Panc1 (cell line): ENCODE measurements at regions of chr4 and their contacts with region 1.

Region 1: DNA sequence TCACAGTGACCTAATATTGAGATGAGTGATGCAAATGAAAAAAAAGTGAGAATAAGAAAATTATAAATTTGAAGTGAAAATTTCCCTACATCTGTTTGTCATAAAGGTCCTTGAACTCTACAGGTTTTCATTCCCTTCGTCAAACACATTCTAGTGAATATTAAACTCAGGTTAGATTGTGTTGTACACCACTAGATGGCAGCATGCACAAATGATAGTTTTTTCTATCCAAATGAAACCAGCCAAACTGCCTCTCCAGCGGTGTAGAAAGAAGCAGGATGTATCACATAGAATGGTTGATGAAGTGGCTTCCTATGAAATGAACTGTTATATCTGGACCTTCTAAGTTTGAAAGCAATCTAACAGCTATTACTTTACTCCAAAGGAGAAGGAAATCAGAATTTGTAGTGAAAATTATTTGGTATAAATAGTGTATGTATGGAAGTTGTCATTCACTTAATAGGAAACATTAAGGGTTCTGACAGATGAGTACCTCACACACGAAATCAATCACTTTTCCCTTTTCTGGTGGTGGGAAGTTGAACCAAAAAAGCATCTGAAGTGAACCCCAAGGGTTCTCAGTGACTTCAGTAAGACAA is 382.7 kb downstream of the UNC5C start:
- DNase-seq: peak; percentile 30
- ATAC-seq: peak; percentile 83
- H3K4me3 ChIP-seq: no peak overlapping the region
- H3K27ac ChIP-seq: peak overlapping the region; percentile 54; the same call in 1 of the 2 replicates
- H3K4me1 ChIP-seq: no peaks in the 10 kb centered on the region
- H3K27me3 ChIP-seq: no peaks in the 10 kb centered on the region
- CTCF ChIP-seq: peak; percentile 48; the same call in 1 of the 2 replicates

Region 2: DNA sequence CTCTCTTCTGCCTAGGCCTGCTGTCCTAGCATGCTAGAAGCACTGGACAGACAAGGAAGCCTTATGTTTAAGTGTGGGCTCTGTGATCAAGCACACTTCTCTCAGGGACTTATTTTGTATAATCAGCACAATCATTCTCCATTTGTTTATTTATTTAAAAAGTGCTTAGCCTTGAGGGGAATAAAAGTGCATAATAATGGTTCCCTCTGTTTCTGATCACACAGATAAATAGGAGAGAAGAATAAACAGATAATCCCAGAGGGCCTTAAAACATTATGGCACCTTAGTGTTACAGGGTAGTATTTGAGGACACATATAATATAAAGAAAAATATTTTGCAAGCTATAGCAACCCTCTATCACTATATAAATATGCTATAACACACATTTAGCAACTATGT is 236.3 kb after region 1 on chr4:
- CTCF ChIA-PET with region 1: no interaction called
- POLR2A ChIA-PET with region 1: no interaction called
- in situ Hi-C with region 1: no loop called
- intact Hi-C with region 1: no loop called
- DNase-seq: no peak
- ATAC-seq: no peak
- H3K4me3 ChIP-seq: no peak overlapping the region
- H3K27ac ChIP-seq: no peak overlapping the region
- H3K4me1 ChIP-seq: no peaks in the 10 kb centered on the region
- H3K27me3 ChIP-seq: no peaks in the 10 kb centered on the region
- CTCF ChIP-seq: no peak

Region 3: DNA sequence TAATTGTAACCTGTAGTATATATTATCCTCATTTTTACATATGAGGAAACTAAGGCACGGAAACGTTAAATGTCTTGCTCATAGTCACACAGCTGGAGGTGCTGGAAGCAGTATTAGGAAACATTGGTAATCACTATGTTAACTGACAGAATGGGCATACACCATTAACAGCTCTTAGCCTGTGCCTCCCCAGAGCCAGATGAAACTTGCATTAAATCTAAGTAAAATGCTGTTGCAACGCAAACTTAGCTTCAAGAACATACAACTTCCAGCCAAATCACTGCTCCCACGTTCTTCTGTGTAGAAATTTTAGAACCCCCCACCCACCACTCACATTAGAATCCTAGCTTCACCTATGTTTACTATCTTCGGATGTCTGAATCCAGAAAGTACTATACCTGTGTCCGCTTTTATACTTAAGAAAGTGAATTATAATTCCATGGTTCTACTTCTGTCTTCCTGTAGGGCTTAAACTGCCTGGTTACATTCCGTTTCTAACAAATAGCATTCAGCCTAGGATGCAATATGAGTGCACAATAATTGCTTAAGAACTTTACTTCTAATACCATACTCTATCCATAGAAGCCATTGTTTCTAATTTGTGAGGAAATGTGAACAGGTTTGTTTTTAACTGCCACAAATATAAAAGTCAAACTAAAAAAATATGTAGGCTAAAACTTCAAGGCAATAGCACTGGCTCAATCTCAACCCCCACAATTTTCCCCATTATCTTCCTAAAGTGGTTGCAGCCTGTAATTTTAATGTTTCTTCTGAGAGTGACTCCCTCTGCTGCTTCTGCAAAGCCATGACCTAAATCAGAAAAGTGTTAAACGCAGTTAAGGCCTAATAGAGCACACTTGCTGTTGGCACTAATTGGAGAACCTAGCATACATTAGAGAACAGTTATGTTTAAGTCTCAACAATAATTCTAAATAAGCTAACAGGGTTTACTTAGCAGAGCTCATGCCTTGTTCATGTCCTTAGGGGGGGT is 378.4 kb after region 1 on chr4:
- CTCF ChIA-PET with region 1: no interaction called
- POLR2A ChIA-PET with region 1: no interaction called
- in situ Hi-C with region 1: no loop called
- intact Hi-C with region 1: loop called (anchors 2 kb)
- DNase-seq: no peak
- ATAC-seq: no peak
- H3K4me3 ChIP-seq: peak overlapping the region; percentile 8; a peak in 2 of 4 replicates
- H3K27ac ChIP-seq: peak overlapping the region; percentile 54
- H3K4me1 ChIP-seq: peaks cover 16% of the 10 kb centered on the region; the same call in 1 of the 2 replicates
- H3K27me3 ChIP-seq: no peaks in the 10 kb centered on the region
- CTCF ChIP-seq: peak; percentile 19; the same call in 1 of the 2 replicates

Region 4: DNA sequence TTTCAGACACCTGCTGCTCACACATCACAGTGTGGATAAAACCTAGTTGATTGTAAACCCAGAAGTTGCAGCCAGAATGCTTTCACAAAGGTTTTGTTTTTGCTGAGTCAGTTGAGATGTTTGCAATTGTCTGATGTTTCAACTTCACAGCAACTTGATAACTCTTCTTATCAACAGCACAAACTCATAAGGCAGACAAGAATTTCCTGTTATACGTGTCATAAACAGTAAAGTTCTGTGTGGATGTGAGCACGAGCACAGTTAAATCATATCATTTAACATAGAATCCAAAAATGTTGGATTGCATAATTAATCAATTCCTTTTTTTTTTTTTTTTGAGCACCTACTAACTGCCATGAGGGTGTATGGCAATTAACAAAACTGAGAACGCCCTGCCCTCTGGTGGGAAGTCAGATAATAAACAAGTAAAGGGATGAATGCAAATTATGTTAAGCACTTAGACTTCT is 1186.1 kb after region 1 on chr4:
- CTCF ChIA-PET with region 1: no interaction called
- POLR2A ChIA-PET with region 1: no interaction called
- in situ Hi-C with region 1: no loop called
- intact Hi-C with region 1: loop called (anchors 5 kb)
- DNase-seq: peak; percentile 2
- ATAC-seq: no peak
- H3K4me3 ChIP-seq: no peak overlapping the region
- H3K27ac ChIP-seq: no peak overlapping the region
- H3K4me1 ChIP-seq: no peaks in the 10 kb centered on the region
- H3K27me3 ChIP-seq: no peaks in the 10 kb centered on the region
- CTCF ChIP-seq: peak; percentile 39; the same call in 1 of the 2 replicates